Posterior vena cava (tissue), 2 donors: ENCODE measurements at regions of chr2 and their contacts with region 1.

Region 1: DNA sequence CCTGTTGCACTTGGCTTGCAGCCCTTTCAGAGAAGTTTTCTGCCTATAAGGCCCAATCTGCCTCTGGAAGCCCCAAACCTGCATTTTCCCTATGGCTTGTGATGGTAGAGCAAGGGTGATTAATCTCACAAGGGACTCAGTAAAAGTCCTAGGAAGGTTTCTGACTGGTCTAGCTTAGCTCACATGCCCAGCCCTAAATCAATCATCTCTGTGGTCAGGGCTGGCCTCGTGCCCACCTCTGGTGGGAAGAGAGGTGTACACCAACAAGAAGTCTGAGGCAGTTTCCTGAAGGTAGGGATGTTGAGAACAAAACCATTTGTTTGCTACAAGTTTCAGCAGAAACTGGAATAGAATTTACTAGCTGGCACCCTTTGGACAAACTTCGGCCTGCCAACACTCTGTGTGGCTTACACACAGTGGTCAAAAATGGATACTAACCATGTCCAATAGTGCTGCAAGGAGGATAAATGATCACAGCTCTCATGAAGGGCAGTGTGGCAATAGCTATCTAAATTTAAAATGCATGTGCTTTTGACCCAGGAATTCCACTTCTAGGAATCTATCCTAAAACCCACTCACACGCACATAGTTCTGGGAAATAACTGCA is 96.4 kb downstream of the EN1 start:
- DNase-seq: no peak

Region 2: DNA sequence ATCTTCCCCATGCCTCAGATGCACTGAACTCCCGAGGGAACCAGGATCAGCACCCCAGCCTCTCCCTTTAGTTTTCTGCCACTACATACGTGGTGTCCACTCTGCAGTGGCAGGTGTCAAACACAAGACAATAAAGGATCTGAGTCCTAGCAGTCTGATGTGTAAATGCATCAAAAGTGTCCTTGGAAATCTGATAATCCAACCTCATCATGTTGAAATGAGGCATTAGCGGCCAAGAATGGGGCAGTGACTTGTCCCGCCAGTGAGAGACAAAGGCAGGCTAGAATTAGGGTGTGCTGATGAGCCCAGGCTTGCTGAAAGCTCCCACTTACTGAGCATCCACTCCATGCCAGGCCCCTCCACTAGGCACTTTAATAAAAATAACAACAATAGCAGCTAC is 43.5 kb after region 1 on chr2:
- intact Hi-C with region 1: loop called in 1 of 2 experiments (anchors 1 kb)
- DNase-seq: no peak

Region 3: GRCh38 chr2:118847497-118848172 is 96.6 kb after region 1 on chr2 and contains the start of gene EN1:
- intact Hi-C with region 1: loop called in 1 of 2 experiments (anchors 10 kb)
- DNase-seq: peak; percentile 92
- total RNA-seq, gene EN1: 2.4 to 4.0 TPM

Region 4: DNA sequence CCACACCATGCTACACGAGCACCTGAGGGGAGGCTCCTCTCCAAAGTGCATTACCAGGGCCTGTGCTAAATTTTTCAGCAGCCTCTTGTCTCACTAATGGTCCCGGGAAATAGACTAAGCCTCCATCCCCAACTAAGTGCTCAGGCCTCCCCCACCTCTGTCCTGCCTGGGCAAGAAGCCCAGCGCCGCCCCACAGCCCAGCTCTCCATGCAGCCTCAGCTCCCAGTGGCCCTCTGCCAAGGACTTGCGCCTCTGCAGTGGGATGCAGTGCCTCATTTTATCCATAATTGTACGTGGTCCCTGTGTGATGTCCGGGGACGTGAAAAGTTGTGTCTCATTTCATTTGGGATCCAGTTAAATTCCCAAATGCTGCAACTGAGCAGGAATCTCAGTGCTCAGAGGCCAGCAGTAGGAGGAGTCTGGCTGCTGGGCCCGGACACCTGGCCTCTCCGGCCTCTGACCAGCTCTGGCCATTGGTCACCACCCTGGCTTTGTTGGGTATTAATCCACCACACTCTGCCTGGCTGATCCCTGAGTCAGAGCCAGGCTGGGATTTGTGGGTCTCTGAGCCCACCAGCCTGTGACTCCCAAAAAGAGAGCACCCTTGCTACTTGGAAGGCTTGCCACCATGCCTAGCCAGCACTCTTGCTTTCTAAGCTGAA is 461.2 kb after region 1 on chr2:
- intact Hi-C with region 1: loop called in 1 of 2 experiments (anchors 5 kb)
- DNase-seq: peak; percentile 76